Posterior vena cava (tissue), 2 donors: ENCODE measurements at regions of chr20 and their contacts with region 1.

Region 1: GRCh38 chr20:10653599-10654249 is 20.1 kb downstream of the JAG1 start:
- DNase-seq: no peak

Region 2: GRCh38 chr20:10626896-10627295 is 26.8 kb before region 1 on chr20:
- intact Hi-C with region 1: loop called in 1 of 2 experiments (anchors 1 kb)
- DNase-seq: no peak